Posterior vena cava (tissue), 2 donors: ENCODE measurements at regions of chr2 and their contacts with region 1.

Region 1: DNA sequence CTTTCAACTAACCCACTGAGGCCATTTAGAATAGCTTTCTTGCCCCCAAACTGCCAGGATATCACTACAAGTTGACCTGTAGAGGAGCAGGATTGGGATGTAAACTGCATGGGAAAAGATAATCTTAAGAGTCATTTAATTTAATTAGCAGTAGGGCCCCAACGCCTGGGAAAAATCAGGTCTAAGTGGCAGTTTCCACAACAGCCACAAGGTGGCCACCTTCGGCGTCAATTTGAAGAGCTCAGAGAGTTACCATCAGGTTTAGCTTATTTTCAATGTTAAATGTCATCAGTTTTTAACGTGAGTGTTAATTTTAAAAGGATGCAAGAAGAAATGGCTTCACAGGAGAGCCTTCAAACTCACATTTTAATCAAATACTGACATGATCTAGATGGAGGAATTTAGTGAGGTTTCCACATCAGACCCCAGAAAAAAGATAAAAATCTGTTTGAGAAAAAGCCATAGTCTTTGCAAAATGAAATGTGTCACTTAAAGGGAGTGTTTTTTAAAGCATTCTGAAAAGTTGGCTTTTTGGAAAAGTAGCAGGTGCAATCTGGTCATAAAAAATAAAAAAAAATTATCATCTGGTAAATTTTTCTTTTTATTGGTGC is 77.3 kb upstream of the UPP2 start:
- DNase-seq: no peak

Region 2: GRCh38 chr2:158060862-158061435 is 36.6 kb after region 1 on chr2:
- intact Hi-C with region 1: no loop called
- DNase-seq: no peak

Region 3: DNA sequence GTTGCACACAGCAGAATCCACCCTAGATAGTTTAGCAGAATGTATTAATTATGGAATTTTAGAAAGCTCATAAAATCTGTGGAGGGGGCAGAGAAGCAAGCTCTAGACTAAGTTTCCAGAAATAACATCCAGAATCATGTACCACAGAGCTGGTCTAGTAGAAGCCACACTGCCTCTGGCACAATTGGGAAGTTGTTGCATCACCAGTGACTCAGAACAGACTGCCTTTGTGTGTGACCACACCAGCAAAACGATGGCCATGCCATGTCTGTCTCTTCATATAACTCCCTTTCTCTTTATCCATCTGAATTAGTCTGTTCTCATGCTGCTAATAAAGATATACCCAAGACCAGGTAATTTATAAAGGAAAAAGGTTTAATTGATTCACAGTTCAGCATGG is 273.2 kb after region 1 on chr2:
- intact Hi-C with region 1: no loop called
- DNase-seq: no peak

Region 4: GRCh38 chr2:158745044-158745865 is 720.9 kb after region 1 on chr2:
- intact Hi-C with region 1: loop called in 1 of 2 experiments (anchors 5 kb)
- DNase-seq: no peak